HCT116 (cell line): ENCODE measurements at regions of chr15 and their contacts with region 1.

Region 1: DNA sequence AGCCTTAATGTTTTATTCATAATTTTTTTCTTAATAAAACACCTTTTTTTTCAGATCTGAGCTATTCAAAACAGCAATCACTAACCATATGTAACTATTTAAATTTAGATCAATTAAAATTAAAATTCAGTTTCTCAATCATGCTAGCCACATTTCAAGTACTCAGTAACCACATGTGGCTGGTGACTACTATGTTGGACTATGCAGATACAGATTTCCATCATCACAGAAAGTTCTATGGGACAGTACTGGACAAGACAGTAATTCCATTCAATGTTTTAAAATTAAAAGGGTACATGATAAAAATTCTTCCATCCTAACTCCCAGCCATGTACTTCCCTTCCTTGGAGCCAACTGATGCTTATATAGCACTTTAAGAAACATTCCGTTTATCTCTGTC is 119.3 kb downstream of the GLDN start:
- DNase-seq: no peak
- ATAC-seq: no peak
- H3K4me3 ChIP-seq: no peak overlapping the region
- H3K27ac ChIP-seq: no peak overlapping the region
- H3K4me1 ChIP-seq: no peaks in the 10 kb centered on the region
- H3K27me3 ChIP-seq: no peaks in the 10 kb centered on the region
- CTCF ChIP-seq: no peak
- POLR2A ChIP-seq: no peak
- RAD21 ChIP-seq: no peak

Region 2: DNA sequence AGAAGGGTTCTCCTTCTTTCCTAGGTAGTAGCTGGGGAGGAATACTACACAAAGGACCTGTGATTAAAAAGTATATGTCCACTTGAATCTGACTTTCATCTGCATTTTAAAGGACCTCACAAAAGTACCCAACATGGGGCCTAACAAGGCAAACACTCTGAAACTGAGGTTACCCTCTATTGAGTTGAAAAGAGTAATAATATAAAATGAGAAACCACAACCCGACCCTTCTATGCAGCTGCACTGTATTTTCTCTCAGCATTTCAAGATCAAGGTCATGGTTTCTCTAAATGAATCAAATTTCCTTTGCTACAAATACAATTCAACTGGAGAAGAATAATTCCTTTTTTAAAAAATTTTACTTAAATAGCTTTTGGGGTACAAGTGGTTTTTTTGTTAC is 55.5 kb after region 1 on chr15:
- CTCF ChIA-PET with region 1: no interaction called
- POLR2A ChIA-PET with region 1: no interaction called
- RAD21 ChIA-PET with region 1: no interaction called
- intact Hi-C with region 1: loop called (anchors 5 kb)
- DNase-seq: no peak
- ATAC-seq: no peak
- H3K4me3 ChIP-seq: no peak overlapping the region
- H3K27ac ChIP-seq: no peak overlapping the region
- H3K4me1 ChIP-seq: no peaks in the 10 kb centered on the region
- H3K27me3 ChIP-seq: no peaks in the 10 kb centered on the region
- CTCF ChIP-seq: no peak
- POLR2A ChIP-seq: no peak
- RAD21 ChIP-seq: no peak